ENCODE measurements at regions of chr12 and their contacts with region 1.

Region 1: DNA sequence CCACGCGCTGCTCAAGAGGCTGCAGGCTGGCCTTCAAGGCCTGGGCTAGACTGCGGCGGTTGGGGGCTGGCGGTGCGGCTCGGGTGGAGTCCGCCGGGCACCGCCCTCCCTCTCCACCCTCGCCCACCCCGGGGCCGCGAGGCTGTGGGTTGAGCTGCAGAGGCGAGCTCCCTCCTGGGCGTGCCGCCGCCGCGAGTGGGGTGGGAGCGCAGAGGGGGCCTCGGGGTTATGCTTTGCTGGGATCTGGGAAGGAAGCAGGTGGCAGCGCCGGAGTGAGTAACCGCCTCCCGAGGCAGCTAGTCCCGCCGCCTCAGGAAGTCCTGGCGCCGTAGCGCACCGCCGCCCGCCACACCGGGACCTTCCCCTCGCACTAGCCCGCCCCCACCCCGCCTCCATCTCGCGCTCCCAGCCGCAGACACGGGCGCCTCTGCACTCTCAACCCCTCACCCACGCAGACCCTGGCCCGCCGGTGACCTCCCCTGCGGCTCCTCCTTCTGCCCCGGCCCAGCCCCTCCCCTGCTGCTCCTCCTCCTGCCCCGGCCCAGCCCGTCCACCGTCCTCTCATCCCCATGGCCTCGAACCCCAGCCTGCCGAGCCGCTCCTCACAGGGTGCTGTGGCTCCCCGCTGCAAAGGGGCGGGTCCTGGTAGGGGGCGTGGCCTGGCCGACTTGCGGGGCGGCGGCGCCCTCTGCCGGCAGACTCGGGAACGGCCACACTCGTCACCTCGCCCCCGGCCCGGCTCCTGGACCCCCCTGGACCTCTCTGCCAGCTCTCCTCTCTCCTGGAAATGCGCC is 16.6 kb downstream of the TAMALIN start:
- DNase-seq: peak; percentile 92 to 93
- ATAC-seq: peak; percentile 51 to 82 (median 62)
- H3K4me3 ChIP-seq: peak overlapping the region; percentile 39
- H3K4me3 Mint-ChIP-seq: peak overlapping the region; percentile 94
- H3K27ac ChIP-seq: peak overlapping the region; percentile 15
- H3K27ac Mint-ChIP-seq: peak overlapping the region; percentile 85 to 90
- H3K4me1 ChIP-seq: peaks cover 39% of the 10 kb centered on the region
- H3K4me1 Mint-ChIP-seq: peaks cover 35 to 44% of the 10 kb centered on the region in 2 donors
- H3K27me3 ChIP-seq: no peaks in the 10 kb centered on the region
- H3K27me3 Mint-ChIP-seq: no peaks in the 10 kb centered on the region
- CTCF ChIP-seq: peak; percentile 82

Region 2: DNA sequence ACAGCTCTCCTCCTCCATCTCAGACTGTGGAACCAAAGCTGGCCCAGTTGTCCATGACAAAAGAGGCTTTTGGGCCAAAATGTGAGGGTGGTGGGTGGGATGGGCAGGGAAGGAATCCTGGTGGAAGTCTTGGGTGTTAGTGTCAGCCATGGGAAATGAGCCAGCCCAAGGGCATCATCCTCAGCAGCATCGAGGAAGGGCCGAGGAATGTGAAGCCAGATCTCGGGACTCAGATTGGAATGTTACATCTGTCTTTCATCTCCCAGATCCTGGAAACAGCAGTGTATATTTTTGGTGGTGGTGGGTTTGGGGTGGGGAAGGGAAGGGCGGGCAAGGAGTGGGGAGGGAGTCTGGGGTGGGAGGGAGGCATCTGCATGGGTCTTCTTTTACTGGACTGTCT is 28.4 kb before region 1 on chr12:
- intact Hi-C with region 1: loop called (anchors 1 kb)
- DNase-seq: no peak
- ATAC-seq: no peak
- H3K4me3 ChIP-seq: no peak overlapping the region
- H3K4me3 Mint-ChIP-seq: no peak overlapping the region
- H3K27ac ChIP-seq: no peak overlapping the region
- H3K27ac Mint-ChIP-seq: no peak overlapping the region
- H3K4me1 ChIP-seq: peaks cover 3% of the 10 kb centered on the region
- H3K4me1 Mint-ChIP-seq: peaks cover 5% of the 10 kb centered on the region in 2 donors
- H3K27me3 ChIP-seq: no peaks in the 10 kb centered on the region
- H3K27me3 Mint-ChIP-seq: no peaks in the 10 kb centered on the region
- CTCF ChIP-seq: no peak

Region 3: DNA sequence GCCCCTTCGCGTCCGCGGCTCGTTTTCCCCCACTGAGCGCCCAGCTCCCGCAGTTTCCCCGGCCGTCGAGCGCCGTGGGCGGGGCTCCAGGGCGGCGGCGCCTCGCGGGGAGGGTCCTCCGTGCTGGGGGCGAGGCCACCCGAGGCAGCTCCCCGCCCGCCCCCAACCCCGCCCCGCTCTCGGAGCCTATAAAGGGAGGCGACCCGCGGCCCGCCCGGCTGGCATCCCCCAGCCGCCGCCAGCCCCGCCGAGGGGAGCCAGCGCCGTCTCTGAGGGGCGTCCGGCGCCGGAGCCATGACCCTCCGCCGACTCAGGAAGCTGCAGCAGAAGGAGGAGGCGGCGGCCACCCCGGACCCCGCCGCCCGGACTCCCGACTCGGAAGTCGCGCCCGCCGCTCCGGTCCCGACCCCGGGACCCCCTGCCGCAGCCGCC is 16.6 kb before region 1 on chr12 and contains the start of gene TAMALIN:
- intact Hi-C with region 1: loop called (anchors 1 kb)
- DNase-seq: peak; percentile 79 to 92
- ATAC-seq: peak; percentile 58 to 75 (median 60)
- H3K4me3 ChIP-seq: peak within 1 kb of the TSS; percentile 69
- H3K4me3 Mint-ChIP-seq: peak within 1 kb of the TSS; percentile 93
- H3K27ac ChIP-seq: peak within 1 kb of the TSS; percentile 61
- H3K27ac Mint-ChIP-seq: peak within 1 kb of the TSS; percentile 90 to 95
- H3K4me1 ChIP-seq: peaks cover 31% of the 10 kb centered on the region
- H3K4me1 Mint-ChIP-seq: peaks cover 27 to 34% of the 10 kb centered on the region in 2 donors
- H3K27me3 ChIP-seq: peaks cover 4% of the 10 kb centered on the region
- H3K27me3 Mint-ChIP-seq: no peaks in the 10 kb centered on the region
- CTCF ChIP-seq: no peak
- total RNA-seq, gene TAMALIN: 403 to 663 (median 424) TPM

Region 4: DNA sequence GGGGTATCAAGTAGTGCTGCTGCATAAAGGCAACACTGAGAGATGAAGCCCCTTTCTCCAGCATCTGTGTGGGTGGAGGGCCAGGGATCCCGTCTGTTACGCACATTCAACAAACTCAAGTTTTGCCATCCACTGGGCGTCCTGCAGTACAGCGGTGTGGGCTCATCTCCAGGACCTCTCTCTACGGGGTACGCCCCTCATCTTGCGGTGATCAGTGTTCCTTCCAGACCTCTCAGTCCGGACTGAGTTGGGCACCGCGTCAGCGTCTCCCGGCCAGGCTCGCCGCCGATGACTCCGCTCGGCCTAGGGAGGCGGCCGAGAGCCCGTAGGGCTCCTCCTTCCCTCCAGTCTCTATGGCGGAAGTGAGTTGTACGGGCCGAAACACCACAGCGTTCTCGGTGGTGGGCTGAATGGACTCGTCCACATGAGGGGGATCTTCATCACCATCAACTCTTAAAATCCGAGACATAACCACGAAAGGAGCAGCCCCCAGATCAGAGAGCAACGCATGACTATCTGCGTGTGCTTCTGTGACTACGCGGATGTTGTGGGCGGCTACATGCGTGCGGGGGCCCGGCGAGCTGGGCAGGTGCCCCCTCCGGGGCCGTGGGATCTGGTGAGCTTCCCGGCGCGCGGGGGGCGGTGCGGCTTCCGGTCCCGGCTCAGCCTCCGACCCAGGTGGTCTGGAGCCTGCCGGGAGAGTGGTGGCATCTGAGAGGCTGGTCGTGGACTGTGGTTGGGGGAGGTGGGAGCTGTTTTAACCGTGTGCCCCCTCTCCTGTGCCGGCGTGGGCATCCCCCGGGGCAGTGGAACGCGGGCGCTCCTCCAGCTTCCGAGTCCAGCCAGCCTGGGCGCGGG is 46.2 kb after region 1 on chr12 and contains the start of gene ATG101:
- intact Hi-C with region 1: loop called (anchors 1 kb)
- DNase-seq: peak; percentile 84 to 95
- ATAC-seq: peak; percentile 93 to 99 (median 94)
- H3K4me3 ChIP-seq: peak within 1 kb of the TSS; percentile 95
- H3K4me3 Mint-ChIP-seq: peak within 1 kb of the TSS; percentile 96
- H3K27ac ChIP-seq: peak within 1 kb of the TSS; percentile 88
- H3K27ac Mint-ChIP-seq: peak within 1 kb of the TSS; percentile 95 to 98
- H3K4me1 ChIP-seq: peaks cover 34% of the 10 kb centered on the region
- H3K4me1 Mint-ChIP-seq: peaks cover 42 to 48% of the 10 kb centered on the region in 2 donors
- H3K27me3 ChIP-seq: no peaks in the 10 kb centered on the region
- H3K27me3 Mint-ChIP-seq: peaks cover 0 to 13% of the 10 kb centered on the region in 2 donors
- CTCF ChIP-seq: peak; percentile 63
- total RNA-seq, gene ATG101: 18.6 to 32.8 (median 23.3) TPM

Region 5: DNA sequence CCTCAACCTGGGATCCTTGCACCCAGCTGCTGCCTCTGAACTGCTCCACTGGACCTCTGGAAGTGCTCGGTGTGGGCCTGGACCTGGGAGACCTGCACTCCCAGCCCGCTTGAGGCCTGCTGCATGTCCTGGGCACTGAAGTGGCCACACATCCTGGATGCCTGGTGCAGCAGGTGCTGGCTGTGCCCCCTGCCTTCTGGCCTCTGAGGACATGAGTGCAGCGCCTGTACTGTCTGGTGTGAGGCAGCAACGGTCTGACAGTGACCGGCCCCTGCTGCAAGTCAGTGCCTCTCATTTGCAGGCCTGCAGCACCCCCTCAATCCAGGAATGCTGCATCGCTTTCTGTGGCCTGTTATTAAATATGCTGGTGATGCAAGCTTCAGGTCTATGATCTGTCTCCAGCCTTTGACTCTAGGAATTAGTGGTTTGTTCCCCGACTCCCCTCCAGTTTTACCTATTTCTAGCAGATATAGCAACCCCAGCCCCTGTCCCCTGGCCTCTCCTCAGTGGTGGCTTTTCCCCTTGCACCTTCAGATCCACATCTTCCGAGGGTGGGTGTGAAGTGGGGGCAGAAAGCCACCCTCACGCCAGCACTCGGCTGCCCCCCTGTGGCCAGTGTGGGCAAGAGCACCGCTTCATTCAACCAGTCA is 59.7 kb after region 1 on chr12:
- intact Hi-C with region 1: loop called (anchors 1 kb)
- DNase-seq: peak; percentile 66 to 84
- ATAC-seq: peak; percentile 76 to 97 (median 90)
- H3K4me3 ChIP-seq: no peak overlapping the region
- H3K4me3 Mint-ChIP-seq: no peak overlapping the region
- H3K27ac ChIP-seq: no peak overlapping the region
- H3K27ac Mint-ChIP-seq: no peak overlapping the region
- H3K4me1 ChIP-seq: peaks cover 22% of the 10 kb centered on the region
- H3K4me1 Mint-ChIP-seq: peaks cover 0 to 13% of the 10 kb centered on the region in 2 donors
- H3K27me3 ChIP-seq: no peaks in the 10 kb centered on the region
- H3K27me3 Mint-ChIP-seq: peaks cover 16 to 25% of the 10 kb centered on the region in 2 donors
- CTCF ChIP-seq: peak; percentile 95

Region 6: DNA sequence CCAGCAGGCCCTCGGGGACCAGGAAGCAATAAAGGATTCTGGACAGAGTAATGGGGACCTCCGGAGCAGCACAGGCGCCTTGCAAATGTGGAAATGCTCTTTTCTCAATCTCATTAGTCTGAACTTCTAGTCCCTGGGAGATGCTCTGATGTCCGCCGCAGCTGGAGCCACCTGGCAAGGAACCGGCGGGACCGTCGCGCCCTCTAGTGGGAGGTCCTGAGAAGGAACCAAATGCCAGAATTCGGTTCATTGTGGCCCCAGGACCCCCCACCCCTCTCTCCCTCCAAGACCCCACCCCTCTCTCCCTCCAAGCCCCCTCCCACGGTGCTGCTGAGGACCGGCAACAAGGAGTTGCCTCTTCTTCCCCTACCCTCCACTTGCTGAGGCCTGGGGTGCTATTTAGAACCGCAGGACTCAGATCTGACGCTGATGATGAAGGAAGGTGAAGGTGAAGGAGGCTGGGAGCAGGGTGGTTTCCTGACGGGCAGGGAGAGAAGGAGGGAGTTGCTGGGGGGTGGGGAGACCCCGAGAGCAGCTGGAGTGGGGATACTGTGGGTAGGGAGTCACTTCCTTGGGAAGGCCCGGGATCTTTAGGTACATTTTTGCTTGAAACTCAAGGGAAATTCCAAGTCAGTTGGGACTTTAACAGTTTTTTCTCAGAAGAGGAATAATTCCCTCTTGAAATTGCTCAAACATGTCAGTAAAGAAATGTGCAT is 98.6 kb after region 1 on chr12:
- intact Hi-C with region 1: loop called (anchors 2 kb)
- DNase-seq: peak; percentile 45 to 77
- ATAC-seq: peak in 2 of 3 donors; percentile 59 to 67
- H3K4me3 ChIP-seq: no peak overlapping the region
- H3K4me3 Mint-ChIP-seq: no peak overlapping the region
- H3K27ac ChIP-seq: no peak overlapping the region
- H3K27ac Mint-ChIP-seq: no peak overlapping the region
- H3K4me1 ChIP-seq: peaks cover 16% of the 10 kb centered on the region
- H3K4me1 Mint-ChIP-seq: peaks cover 4 to 7% of the 10 kb centered on the region in 2 donors
- H3K27me3 ChIP-seq: peaks cover 10% of the 10 kb centered on the region
- H3K27me3 Mint-ChIP-seq: peaks cover 27 to 29% of the 10 kb centered on the region in 2 donors
- CTCF ChIP-seq: peak; percentile 74

Measured in natural killer cell (primary cell).